Activated CD4-positive, alpha-beta T cell treated with anti-CD3 and anti-CD28 coated beads for 36 hours (primary cell): ENCODE measurements at regions of chr19 and their contacts with region 1.

Region 1: DNA sequence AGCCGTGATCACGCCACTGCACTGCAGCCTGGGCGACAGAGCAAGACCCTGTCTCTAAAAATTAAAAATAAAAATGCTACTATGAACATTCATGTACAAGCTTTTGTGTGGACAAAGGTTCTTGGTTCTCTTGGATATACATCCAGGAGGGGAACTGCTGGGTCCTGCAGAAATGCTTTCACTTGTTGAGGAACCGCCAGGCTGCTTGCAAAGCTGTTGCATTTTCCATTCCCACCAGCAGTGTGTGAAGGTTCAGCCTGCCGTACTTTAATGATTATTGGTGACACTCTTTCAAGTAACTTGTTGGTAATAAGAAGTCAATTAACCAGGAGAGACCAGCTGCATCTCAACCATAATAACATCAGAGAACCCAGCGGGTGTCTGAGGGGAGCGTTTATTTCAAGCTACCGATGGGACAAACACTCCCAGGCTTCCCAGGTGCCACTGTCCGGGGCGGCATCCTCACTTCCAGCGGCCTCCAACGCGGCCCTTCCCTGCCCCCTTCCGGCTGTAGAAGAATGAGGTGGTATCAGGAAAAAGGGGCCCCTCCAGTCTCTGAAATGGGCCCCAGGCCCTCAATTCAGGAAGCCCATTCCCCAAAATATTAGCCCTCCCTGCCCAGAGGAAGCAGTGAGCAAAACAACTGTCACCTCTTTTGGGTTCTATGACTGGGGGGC is 15.2 kb upstream of the PPP1R12C start:
- DNase-seq: no peak
- ATAC-seq: no peak
- H3K4me3 Mint-ChIP-seq: no peak overlapping the region
- H3K27ac Mint-ChIP-seq: no peak overlapping the region
- H3K4me1 Mint-ChIP-seq: no peaks in the 10 kb centered on the region
- H3K27me3 Mint-ChIP-seq: peaks cover 20% of the 10 kb centered on the region

Region 2: GRCh38 chr19:54882758-54883157 is 249.8 kb before region 1 on chr19:
- CTCF ChIA-PET with region 1: no interaction called
- POLR2A ChIA-PET with region 1: no interaction called
- intact Hi-C with region 1: loop called in 1 of 2 experiments (anchors 5 kb)
- DNase-seq: no peak
- ATAC-seq: peak; percentile 70
- H3K4me3 Mint-ChIP-seq: no peak overlapping the region
- H3K27ac Mint-ChIP-seq: no peak overlapping the region
- H3K4me1 Mint-ChIP-seq: no peaks in the 10 kb centered on the region
- H3K27me3 Mint-ChIP-seq: peaks cover 31% of the 10 kb centered on the region

Region 3: DNA sequence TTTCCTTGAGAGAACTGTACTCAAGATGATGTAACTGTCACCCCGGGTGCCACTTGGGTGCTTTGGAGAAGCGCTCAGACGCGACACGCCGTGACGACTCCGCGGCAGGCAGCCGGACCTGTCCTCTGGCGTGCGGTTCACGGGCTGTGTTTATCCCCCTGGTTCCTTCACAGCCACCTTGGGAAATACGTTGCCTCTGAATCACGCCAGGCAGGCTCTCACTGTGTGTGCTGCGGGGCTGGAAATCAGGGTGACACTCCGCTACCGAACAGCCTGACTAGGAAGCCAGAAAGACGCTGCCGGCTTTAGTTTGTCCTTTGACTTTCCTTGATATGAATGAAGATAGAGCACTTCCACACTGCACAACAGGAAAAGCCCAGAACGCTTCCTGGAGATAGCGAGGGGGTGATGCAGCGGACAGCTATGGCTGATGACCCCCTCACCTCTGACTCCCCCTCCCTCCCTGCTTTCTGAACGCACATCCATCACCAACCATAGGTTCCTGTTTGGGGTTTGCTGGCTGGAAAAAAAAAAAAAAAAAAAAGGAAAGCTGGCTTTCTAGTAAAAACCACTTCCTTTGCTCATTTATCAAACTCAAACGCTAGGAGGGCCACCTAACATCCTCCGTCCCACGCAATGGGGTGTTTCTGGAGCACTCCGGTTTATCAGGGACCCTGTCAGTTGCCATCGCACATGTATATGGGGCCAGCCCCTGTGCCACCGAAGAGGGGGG is 90.8 kb before region 1 on chr19:
- CTCF ChIA-PET with region 1: no interaction called
- POLR2A ChIA-PET with region 1: no interaction called
- intact Hi-C with region 1: no loop called
- DNase-seq: peak; percentile 60
- ATAC-seq: peak; percentile 75
- H3K4me3 Mint-ChIP-seq: peak overlapping the region; percentile 41
- H3K27ac Mint-ChIP-seq: peak overlapping the region; percentile 76
- H3K4me1 Mint-ChIP-seq: peaks cover 19% of the 10 kb centered on the region
- H3K27me3 Mint-ChIP-seq: no peaks in the 10 kb centered on the region

Region 4: DNA sequence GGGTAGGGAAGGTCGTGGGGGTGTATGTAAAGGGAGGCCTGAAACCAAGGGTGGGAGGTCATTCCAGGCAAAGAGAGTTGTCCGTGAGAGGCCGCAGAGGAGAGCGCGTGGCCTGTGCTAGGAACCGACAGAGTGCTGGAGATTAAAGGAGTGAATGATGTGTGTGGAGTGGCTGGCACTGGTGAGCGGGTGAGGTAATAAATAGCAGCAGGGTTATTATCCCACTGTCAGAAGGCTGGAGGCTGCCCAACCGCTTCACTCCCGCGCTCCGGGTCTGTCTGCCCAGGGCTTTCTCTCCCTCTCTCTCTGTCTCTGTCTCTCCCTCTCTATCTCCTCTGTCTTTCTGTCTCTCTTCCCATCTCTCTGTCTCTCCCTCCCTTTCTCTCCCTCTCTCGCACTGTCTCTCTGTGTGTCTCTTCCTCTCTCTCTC is 430.7 kb after region 1 on chr19:
- CTCF ChIA-PET with region 1: no interaction called
- POLR2A ChIA-PET with region 1: no interaction called
- intact Hi-C with region 1: no loop called
- DNase-seq: no peak
- ATAC-seq: no peak
- H3K4me3 Mint-ChIP-seq: no peak overlapping the region
- H3K27ac Mint-ChIP-seq: no peak overlapping the region
- H3K4me1 Mint-ChIP-seq: no peaks in the 10 kb centered on the region
- H3K27me3 Mint-ChIP-seq: peaks cover 7% of the 10 kb centered on the region